ENCODE measurements at regions of chr1 and their contacts with region 1.

Region 1: DNA sequence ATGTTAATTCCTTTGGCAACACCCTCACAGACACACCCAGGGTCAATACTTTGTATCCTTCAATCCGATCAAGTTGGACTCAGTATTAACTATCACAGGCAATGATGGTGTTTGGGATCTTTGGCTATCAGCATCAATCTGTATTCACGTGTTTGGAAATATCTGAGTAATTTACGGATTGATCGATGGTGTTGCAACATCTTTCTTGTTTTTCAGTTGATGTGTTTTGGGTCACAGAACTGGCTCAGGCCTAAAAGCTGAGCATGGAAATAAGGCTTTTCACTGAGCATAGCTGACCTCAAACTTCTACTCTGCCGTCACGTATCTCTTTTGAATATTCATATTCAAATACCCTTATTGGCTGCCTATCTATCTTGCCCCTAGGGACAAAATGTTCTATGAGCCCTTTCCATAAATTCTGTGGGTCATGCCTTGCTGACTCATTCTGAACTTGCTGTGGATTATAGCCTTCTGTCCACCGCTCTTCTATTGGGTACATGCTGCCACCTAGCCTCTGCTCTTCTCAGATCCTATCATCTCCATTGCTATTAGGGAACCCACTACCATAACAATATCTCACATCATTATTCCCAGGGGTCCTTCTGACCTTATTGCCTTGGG is 156.0 kb downstream of the PDE4B start:
- ATAC-seq: peak in 5 of 8 experiments; percentile 25 to 98 (median 85)
- H3K4me3 ChIP-seq: no peak overlapping the region
- H3K27ac ChIP-seq: no peak overlapping the region
- H3K4me1 ChIP-seq: no peaks in the 10 kb centered on the region

Region 2: GRCh38 chr1:65431111-65431705 is 517.5 kb before region 1 on chr1:
- in situ Hi-C with region 1: loop called in 1 of 9 experiments (anchors 25 kb)
- ATAC-seq: peak in 2 of 8 experiments; percentile 28 to 45
- H3K4me3 ChIP-seq: no peak overlapping the region
- H3K27ac ChIP-seq: no peak overlapping the region
- H3K4me1 ChIP-seq: no peaks in the 10 kb centered on the region

Region 3: GRCh38 chr1:65717815-65718454 is 230.8 kb before region 1 on chr1:
- in situ Hi-C with region 1: loop called in 2 of 9 experiments (anchors 10 to 25 kb)
- ATAC-seq: peak in 3 of 8 experiments; percentile 61 to 95 (median 87)
- H3K4me3 ChIP-seq: no peak overlapping the region
- H3K27ac ChIP-seq: no peak overlapping the region
- H3K4me1 ChIP-seq: peaks cover 0 to 2% of the 10 kb centered on the region in 2 donors

Region 4: DNA sequence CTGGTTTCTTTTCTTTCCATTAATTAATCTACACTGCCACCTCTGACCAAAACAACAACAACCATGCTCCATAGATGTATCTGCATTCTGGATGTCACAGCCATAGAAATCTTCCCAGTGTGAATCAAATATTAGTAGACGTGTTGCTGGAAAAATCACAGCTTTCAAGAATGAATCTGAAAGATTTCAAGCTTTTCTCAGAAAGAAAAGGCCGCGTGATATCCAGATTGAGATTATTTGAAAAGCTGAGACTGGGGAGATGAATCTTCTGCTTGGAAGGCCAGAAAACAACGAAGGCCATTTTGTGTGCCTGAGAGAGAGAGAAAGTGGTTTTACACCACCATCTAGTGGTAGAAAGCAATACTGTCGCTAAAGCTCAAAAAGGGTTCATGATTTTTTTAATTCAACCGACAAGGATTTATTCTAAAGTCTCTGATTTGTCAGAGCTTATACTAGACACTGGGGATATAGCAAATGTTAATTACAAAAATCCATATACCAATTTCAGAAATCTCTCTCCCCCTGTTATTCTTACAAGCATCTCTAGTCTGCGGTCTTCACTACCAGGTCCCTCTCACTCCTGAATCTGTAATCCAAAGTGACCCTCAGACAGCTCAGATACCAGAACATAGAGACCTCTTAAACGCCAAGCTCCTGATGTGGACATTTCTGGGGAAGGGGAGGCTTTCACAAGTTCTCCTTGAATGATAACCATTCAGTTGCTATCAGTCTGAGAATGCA is 497.7 kb after region 1 on chr1:
- in situ Hi-C with region 1: loop called in 5 of 9 experiments (anchors 25 kb)
- ATAC-seq: peak; percentile 58 to 79 (median 68)
- H3K4me3 ChIP-seq: no peak overlapping the region
- H3K27ac ChIP-seq: no peak overlapping the region
- H3K4me1 ChIP-seq: peaks cover 2 to 5% of the 10 kb centered on the region in 2 donors

Region 5: DNA sequence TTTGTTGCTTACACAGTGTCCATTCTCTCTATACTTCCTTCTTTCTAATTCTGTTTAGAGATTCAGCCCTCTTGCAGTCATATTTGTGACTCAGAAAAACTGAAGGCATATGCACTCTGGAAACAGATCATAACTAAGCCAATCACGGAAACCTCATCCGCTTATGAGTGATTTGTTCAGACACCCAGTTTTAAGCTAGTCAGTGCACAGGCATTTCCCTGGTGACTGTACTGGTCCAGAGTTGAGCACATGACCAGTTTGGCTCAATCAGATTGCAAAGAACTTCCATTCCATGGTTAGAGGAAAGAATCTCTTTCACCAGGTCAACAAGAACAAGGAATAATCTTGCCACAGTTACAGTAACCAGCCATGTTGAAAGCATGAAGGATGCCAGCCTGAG is 516.1 kb after region 1 on chr1:
- in situ Hi-C with region 1: loop called in 3 of 9 experiments (anchors 25 kb)
- ATAC-seq: peak in 3 of 8 experiments; percentile 47 to 82 (median 74)
- H3K4me3 ChIP-seq: no peak overlapping the region
- H3K27ac ChIP-seq: no peak overlapping the region
- H3K4me1 ChIP-seq: no peaks in the 10 kb centered on the region